Heart right ventricle (tissue), 16 donors: ENCODE measurements at regions of chr14 and their contacts with region 1.

Region 1: GRCh38 chr14:70317969-70318634 is 41.4 kb downstream of the COX16 start:
- DNase-seq: peak in 1 of 2 donors; percentile 27
- ATAC-seq: peak in 5 of 8 donors; percentile 20 to 81 (median 80)
- H3K4me3 ChIP-seq: no peak overlapping the region
- H3K27ac ChIP-seq: no peak overlapping the region
- H3K4me1 ChIP-seq: no peaks in the 10 kb centered on the region
- H3K27me3 ChIP-seq: peaks cover 0 to 12% (median 0%) of the 10 kb centered on the region in 7 donors
- CTCF ChIP-seq: peak in 7 of 9 donors; percentile 35 to 60 (median 51)

Region 2: DNA sequence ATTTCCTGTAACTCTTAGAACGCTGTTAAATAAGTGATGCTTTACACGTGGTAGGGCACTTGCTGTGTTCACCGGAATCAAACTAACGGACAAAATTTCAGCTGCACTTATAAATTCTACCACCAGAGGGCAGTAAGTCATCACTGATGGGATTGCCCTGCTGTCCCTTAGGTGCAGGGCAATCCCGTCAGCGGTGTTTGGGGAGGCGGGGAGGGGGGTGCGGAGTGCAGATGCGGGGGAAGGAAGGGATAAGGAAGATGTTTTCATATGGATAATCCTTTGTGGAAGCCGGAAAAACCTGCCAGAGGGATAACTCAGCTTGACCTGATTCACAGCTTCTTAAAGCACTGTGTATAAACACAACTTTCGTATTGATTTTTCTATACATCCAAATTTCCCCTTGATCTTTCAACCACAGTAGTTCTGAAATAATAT is 499.3 kb before region 1 on chr14:
- intact Hi-C with region 1: loop called in 4 of 10 experiments (anchors 2 to 10 kb)
- DNase-seq: peak in 1 of 2 donors; percentile 48
- ATAC-seq: peak in 7 of 8 donors; percentile 56 to 79 (median 62)
- H3K4me3 ChIP-seq: no peak overlapping the region
- H3K27ac ChIP-seq: no peak overlapping the region
- H3K4me1 ChIP-seq: peaks cover 0 to 4% (median 0%) of the 10 kb centered on the region in 9 donors
- H3K27me3 ChIP-seq: peaks cover 0 to 51% (median 38%) of the 10 kb centered on the region in 7 donors
- CTCF ChIP-seq: peak; percentile 74 to 87 (median 82)

Region 3: DNA sequence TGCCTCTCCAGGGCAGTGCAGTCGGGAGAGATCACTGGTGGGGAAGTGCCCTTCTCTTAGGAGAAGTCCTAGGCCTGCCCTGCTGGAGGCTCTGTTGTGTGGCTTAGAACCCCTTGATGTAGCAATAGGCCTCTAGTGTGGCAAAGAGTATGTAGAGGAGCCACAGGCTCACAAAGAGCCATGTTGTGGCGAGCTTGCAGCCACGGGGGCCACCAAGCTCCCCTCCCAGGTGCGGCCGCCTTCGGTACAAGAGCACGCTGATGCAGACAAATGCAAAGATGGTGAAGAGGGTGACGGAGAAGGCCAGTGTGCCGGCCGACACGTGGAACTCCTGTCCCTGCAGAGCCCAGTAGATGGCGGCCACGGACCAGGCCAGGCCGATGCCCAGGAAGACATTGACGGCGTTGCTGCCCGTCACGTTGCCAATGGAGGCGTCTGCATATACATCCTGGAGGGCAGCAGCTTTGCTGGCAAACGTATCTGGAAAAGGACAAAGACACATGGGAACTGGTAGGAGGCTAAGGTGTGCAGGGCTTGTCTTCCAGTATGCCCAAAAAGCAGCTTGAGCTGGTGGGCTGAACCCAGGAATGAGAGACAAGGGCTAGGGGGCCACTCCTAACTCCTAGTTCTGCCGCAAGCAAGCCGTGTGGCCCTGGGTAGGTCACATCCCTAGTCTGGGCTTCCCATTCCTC is 272.1 kb before region 1 on chr14:
- intact Hi-C with region 1: loop called in 2 of 10 experiments (anchors 5 kb)
- DNase-seq: peak; percentile 37 to 61
- ATAC-seq: peak; percentile 43 to 84 (median 72)
- H3K4me3 ChIP-seq: no peak overlapping the region
- H3K27ac ChIP-seq: no peak overlapping the region
- H3K4me1 ChIP-seq: peaks cover 0 to 6% (median 0%) of the 10 kb centered on the region in 9 donors
- H3K27me3 ChIP-seq: peaks cover 0 to 44% (median 19%) of the 10 kb centered on the region in 7 donors
- CTCF ChIP-seq: peak; percentile 36 to 73 (median 68)

Region 4: GRCh38 chr14:70086685-70087379 is 231.3 kb before region 1 on chr14:
- intact Hi-C with region 1: loop called in 6 of 10 experiments (anchors 5 to 10 kb)
- DNase-seq: no peak
- ATAC-seq: peak in 1 of 8 donors; percentile 22
- H3K4me3 ChIP-seq: no peak overlapping the region
- H3K27ac ChIP-seq: no peak overlapping the region
- H3K4me1 ChIP-seq: no peaks in the 10 kb centered on the region
- H3K27me3 ChIP-seq: peaks cover 0 to 61% (median 29%) of the 10 kb centered on the region in 7 donors
- CTCF ChIP-seq: peak in 7 of 9 donors; percentile 36 to 60 (median 51)

Region 5: DNA sequence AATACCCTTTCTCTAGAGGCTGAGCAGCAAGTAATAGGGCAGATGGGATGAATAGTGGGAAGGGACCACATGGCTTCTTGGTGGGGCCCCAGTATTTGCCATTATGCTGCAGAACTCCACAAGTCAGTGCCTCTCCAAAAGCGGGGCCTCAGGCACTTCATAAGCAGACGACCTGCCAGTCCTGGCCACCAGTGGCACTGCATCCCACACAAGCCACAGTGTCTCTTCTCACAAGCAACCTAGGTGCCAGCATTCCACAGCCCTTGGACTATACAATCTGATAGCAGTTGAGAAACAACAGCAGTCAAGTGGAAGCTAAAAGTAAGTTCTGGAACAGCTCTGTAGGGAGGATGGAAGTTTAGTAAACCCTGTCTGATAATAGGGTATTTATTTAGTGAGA is 125.2 kb before region 1 on chr14:
- intact Hi-C with region 1: no loop called
- DNase-seq: no peak
- ATAC-seq: no peak
- H3K4me3 ChIP-seq: no peak overlapping the region
- H3K27ac ChIP-seq: no peak overlapping the region
- H3K4me1 ChIP-seq: peaks cover 0 to 17% (median 13%) of the 10 kb centered on the region in 9 donors
- H3K27me3 ChIP-seq: peaks cover 6 to 67% (median 49%) of the 10 kb centered on the region in 7 donors
- CTCF ChIP-seq: no peak